Heart left ventricle (tissue), 16 donors: ENCODE measurements at regions of chr11 and their contacts with region 1.

Region 1: DNA sequence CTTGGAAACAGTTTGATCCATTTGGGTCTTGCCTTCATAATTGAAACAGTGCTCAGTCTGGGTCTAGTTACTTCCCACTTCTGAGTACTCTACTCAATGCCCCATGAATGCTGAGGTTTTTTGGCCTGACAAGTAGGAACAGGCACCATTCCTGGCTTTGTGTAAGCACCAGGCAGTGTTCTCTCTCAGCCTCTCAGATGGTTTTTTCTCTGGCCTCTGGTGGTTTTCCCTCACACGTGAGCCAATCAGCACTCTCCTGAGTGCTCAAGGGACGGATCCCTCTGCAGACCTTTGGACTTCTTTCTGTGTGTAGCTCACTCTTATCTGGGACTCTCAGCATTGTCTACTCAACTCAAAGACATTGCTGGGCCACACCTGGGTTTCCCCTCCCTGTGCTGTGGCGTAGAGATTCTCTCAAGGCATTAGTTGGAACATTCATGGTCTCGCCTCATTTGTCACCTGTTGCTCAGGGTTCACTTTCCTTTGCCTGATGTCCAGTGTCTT is 21.3 kb downstream of the SIK2 start:
- DNase-seq: no peak
- ATAC-seq: peak in 2 of 4 donors; percentile 52
- H3K4me3 ChIP-seq: no peak overlapping the region
- H3K27ac ChIP-seq: no peak overlapping the region
- H3K4me1 ChIP-seq: peaks cover 0 to 9% (median 0%) of the 10 kb centered on the region in 12 donors
- H3K27me3 ChIP-seq: no peaks in the 10 kb centered on the region
- CTCF ChIP-seq: no peak
- POLR2A ChIP-seq: no peak

Region 2: DNA sequence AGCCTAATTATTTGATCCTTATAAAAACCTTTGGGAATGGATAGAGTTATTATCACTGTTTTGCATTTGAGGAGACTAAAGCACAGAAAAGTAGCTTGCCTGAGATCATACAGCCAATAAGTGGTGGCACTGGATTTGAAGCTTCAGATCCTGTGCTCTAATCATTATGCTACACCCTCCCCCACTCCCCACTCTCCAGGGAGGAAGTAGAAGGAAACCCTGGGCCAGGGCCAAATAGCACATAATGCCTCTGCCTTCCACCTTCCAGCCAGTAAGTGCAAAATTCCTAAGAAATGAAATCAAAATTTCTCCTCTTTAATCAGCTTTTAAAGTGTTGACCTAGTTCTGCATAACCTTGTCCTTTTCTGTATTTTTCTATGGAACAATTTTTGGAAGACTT is 40.2 kb after region 1 on chr11:
- intact Hi-C with region 1: loop called in 1 of 10 experiments (anchors 5 kb)
- DNase-seq: peak in 4 of 5 donors; percentile 60 to 76 (median 62)
- ATAC-seq: peak; percentile 48 to 88 (median 72)
- H3K4me3 ChIP-seq: no peak overlapping the region
- H3K27ac ChIP-seq: no peak overlapping the region
- H3K4me1 ChIP-seq: peaks cover 0 to 31% (median 16%) of the 10 kb centered on the region in 12 donors
- H3K27me3 ChIP-seq: no peaks in the 10 kb centered on the region
- CTCF ChIP-seq: no peak
- POLR2A ChIP-seq: no peak